Ascending aorta (tissue), 2 donors: ENCODE measurements at regions of chr2 and their contacts with region 1.

Region 1: DNA sequence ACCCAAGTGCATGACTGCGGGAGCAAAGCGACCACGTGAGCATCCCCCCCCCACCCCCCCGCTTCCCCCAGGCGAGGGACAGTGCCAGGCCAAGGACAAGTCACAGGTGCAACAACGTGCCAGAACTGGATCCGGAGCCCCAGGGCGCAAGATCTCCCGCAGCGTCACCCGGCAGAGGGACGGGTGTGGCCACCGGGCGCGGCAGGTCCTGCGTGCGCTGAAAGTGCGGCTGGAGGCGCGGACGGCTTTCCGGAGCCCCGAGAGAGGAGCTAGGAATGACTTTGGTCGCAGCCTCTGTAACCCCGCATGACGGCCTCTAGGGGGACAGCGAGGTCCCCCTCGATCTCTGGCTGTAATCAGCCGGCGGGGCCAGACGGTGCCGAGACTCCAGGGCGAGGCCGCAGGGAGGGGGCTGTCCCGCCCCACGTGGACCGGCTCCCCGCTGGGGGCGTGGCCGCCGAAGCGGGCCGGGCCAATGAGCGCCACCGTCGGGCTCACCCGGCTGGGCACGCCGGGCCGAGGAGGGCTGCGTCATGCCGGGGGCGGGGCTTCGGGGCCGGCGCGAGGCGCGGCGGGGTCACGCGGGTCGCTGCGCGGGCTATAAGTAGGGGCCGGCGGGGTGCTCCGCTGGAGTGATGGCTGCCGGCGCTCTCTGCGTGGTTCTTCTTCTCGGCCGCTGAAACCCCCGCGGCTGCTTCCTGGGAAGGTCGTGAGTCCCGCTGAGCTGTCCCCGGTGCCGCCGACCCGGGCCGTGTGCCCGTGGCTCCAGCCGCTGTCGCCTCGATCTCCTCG is at the start of gene SLC20A1:
- DNase-seq: peak; percentile 73 to 96
- H3K4me3 ChIP-seq: peak within 1 kb of the TSS; percentile 74 to 96
- H3K27ac ChIP-seq: peak within 1 kb of the TSS; percentile 95 to 98
- H3K4me1 ChIP-seq: peaks cover 0 to 20% of the 10 kb centered on the region in 2 donors
- H3K27me3 ChIP-seq: no peaks in the 10 kb centered on the region
- CTCF ChIP-seq: peak in 2 of 3 experiments; percentile 22 to 31
- total RNA-seq, gene SLC20A1: 18.4 TPM

Region 2: DNA sequence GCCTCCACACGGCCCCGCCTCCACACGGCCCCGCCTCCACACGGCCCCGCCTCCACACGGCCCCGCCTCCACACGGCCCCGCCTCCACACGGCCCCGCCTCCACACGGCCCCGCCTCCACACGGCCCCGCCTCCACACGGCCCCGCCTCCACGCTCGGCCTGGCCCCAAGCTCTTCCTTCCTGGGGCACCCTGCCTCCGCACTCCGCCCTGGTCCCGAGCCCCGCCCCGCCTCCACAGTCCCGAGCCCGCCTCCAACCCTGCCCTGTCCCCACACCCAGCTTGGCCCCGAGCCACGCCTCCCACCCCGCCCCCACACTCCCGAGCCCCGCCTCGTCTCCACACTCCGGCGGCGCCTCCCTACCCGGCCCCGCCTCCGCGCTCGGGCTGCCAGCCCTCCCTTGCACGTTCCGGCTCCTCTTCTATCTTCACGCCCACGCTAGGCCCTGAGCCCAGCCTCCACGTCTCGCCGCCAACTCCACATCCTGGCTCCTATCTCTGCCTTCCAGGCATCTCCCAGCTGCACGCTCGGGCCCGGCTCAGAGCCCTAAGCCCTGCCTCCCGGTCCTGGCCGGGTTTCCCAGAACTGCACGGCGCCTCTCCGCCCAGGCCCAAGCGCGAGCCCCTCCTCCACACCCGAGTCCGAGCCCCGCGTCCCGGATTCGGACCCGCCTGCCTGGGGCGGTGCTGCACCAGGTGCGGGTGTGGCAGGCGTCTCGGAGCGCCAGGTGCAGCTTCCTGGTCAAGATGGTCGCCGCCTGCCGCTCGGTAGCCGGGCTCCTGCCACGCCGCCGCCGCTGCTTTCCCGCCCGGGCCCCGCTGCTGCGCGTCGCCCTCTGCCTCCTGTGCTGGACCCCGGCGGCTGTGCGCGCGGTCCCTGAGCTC is 590.4 kb before region 1 on chr2 and contains the start of gene TMEM87B:
- intact Hi-C with region 1: loop called (anchors 5 kb)
- DNase-seq: peak; percentile 88 to 98
- H3K4me3 ChIP-seq: peak within 1 kb of the TSS; percentile 78 to 98
- H3K27ac ChIP-seq: peak within 1 kb of the TSS; percentile 96 to 98
- H3K4me1 ChIP-seq: peaks cover 0 to 21% of the 10 kb centered on the region in 2 donors
- H3K27me3 ChIP-seq: no peaks in the 10 kb centered on the region
- CTCF ChIP-seq: no peak
- total RNA-seq, gene TMEM87B: 11.7 TPM

Region 3: GRCh38 chr2:112542123-112542983 is 103.2 kb before region 1 on chr2 and contains the start of gene POLR1B:
- intact Hi-C with region 1: loop called (anchors 1 kb)
- DNase-seq: peak; percentile 19 to 90
- H3K4me3 ChIP-seq: peak within 1 kb of the TSS; percentile 86
- H3K27ac ChIP-seq: peak within 1 kb of the TSS; percentile 91 to 93
- H3K4me1 ChIP-seq: peaks cover 3 to 11% of the 10 kb centered on the region in 2 donors
- H3K27me3 ChIP-seq: no peaks in the 10 kb centered on the region
- CTCF ChIP-seq: no peak
- total RNA-seq, gene POLR1B: 3.6 TPM

Region 4: GRCh38 chr2:112601751-112602150 is 43.8 kb before region 1 on chr2:
- intact Hi-C with region 1: loop called (anchors 2 kb)
- DNase-seq: peak in 1 of 2 donors; percentile 55
- H3K4me3 ChIP-seq: no peak overlapping the region
- H3K27ac ChIP-seq: no peak overlapping the region
- H3K4me1 ChIP-seq: no peaks in the 10 kb centered on the region
- H3K27me3 ChIP-seq: no peaks in the 10 kb centered on the region
- CTCF ChIP-seq: no peak